ENCODE measurements at regions of chr20 and their contacts with region 1.

Region 1: GRCh38 chr20:47379433-47380150 is 23.1 kb upstream of the ZMYND8 start:
- DNase-seq: no peak
- H3K4me3 ChIP-seq: no peak overlapping the region
- H3K27ac ChIP-seq: no peak overlapping the region
- H3K4me1 ChIP-seq: peaks cover 5% of the 10 kb centered on the region
- H3K27me3 ChIP-seq: no peaks in the 10 kb centered on the region
- CTCF ChIP-seq: no peak
- POLR2A ChIP-seq: no peak

Region 2: DNA sequence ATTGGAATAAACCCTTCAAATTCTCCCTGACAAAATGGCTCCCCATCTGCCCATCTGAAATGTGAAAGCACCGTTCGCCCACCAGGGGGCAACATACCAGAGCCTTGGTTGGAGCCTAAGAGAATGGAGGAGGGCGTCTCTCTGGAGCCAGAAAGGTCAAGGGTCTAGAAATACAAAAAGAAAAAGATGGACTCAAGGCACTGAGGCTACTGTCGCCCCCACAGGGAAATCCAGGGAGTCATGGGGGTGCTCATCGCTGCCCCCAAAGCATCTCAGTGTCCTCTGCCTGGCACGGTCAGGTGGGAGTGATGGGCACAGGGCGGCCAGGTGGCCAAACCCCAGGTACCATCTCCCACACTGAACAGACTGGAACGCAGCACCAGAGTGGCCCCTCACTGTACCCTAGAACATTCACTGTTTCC is 159.4 kb before region 1 on chr20:
- CTCF ChIA-PET with region 1: interaction called, 68 read pairs
- POLR2A ChIA-PET with region 1: no interaction called
- dilution Hi-C with region 1: no loop called
- intact Hi-C with region 1: loop called (anchors 1 kb)
- DNase-seq: peak; percentile 32
- H3K4me3 ChIP-seq: no peak overlapping the region
- H3K27ac ChIP-seq: no peak overlapping the region
- H3K4me1 ChIP-seq: no peaks in the 10 kb centered on the region
- H3K27me3 ChIP-seq: no peaks in the 10 kb centered on the region
- CTCF ChIP-seq: peak; percentile 63 to 68
- POLR2A ChIP-seq: no peak

Region 3: DNA sequence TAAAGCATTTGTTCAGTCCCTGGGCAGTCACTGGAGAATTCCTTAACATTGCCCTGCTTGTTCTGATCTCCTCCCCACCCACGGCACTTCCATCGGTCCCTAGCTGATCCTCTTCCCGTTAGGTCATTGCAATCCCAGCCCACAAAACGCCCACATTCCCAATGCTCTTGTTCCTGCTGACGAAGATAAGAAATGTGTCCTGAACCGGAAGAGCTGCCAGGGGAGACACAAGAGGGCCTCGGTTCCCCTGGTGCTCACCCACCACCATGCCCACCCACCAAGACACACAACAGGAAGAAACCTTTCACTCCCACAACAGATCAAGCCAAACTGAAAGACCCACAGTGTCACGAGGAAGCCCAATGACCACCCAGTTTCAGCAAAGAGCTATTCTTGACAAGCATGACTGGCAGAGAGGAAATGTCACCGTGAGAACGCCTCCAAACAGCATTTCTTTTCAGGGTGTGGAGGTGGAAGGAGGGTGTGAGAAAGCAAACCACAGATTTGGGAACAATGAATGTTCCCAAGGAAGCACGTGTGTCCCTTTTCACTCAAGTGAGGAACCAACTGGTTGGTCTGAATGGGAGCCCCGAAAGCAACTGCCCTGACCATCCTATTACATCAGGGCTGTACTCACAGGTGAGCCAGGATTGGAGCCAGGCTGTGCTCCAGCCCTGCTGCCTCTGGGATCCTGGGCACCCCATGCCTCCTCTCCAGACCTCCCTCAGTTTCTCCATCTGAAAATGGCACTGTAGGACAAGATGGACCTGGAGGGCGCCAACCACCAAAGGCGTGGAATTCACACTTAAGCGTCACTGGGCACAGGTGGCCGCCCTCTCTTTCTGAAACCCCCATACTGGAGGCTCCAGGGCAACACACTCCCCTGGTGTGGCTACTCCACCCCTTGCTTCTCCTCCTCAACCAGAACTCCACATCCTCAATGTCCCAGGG is 120.6 kb before region 1 on chr20:
- CTCF ChIA-PET with region 1: interaction called, 37 read pairs
- POLR2A ChIA-PET with region 1: no interaction called
- dilution Hi-C with region 1: no loop called
- intact Hi-C with region 1: no loop called
- DNase-seq: peak; percentile 66
- H3K4me3 ChIP-seq: no peak overlapping the region
- H3K27ac ChIP-seq: peak overlapping the region; percentile 56
- H3K4me1 ChIP-seq: peaks cover 14% of the 10 kb centered on the region
- H3K27me3 ChIP-seq: no peaks in the 10 kb centered on the region
- CTCF ChIP-seq: no peak
- POLR2A ChIP-seq: no peak

Region 4: GRCh38 chr20:47304287-47304686 is 75.3 kb before region 1 on chr20:
- CTCF ChIA-PET with region 1: interaction called, 139 read pairs
- POLR2A ChIA-PET with region 1: interaction called, 3 read pairs
- dilution Hi-C with region 1: no loop called
- intact Hi-C with region 1: loop called (anchors 1 kb)
- DNase-seq: peak; percentile 57
- H3K4me3 ChIP-seq: no peak overlapping the region
- H3K27ac ChIP-seq: peak overlapping the region; percentile 19
- H3K4me1 ChIP-seq: peaks cover 20% of the 10 kb centered on the region
- H3K27me3 ChIP-seq: no peaks in the 10 kb centered on the region
- CTCF ChIP-seq: peak in 1 of 2 donors; percentile 5
- POLR2A ChIP-seq: no peak

Region 5: GRCh38 chr20:47348539-47349142 is 31.0 kb before region 1 on chr20:
- CTCF ChIA-PET with region 1: interaction called, 406 read pairs
- POLR2A ChIA-PET with region 1: interaction called, 3 read pairs
- dilution Hi-C with region 1: no loop called
- intact Hi-C with region 1: no loop called
- DNase-seq: peak; percentile 43
- H3K4me3 ChIP-seq: no peak overlapping the region
- H3K27ac ChIP-seq: peak overlapping the region; percentile 97
- H3K4me1 ChIP-seq: peaks cover 62% of the 10 kb centered on the region
- H3K27me3 ChIP-seq: no peaks in the 10 kb centered on the region
- CTCF ChIP-seq: no peak
- POLR2A ChIP-seq: no peak

Region 6: GRCh38 chr20:47610247-47610944 is 230.8 kb after region 1 on chr20:
- CTCF ChIA-PET with region 1: interaction called, 10 read pairs
- POLR2A ChIA-PET with region 1: no interaction called
- dilution Hi-C with region 1: no loop called
- intact Hi-C with region 1: no loop called
- DNase-seq: peak; percentile 93
- H3K4me3 ChIP-seq: no peak overlapping the region
- H3K27ac ChIP-seq: peak overlapping the region; percentile 95
- H3K4me1 ChIP-seq: peaks cover 37% of the 10 kb centered on the region
- H3K27me3 ChIP-seq: no peaks in the 10 kb centered on the region
- CTCF ChIP-seq: no peak
- POLR2A ChIP-seq: no peak